ENCODE measurements at regions of chr2 and their contacts with region 1.

Region 1: GRCh38 chr2:55168221-55169154 is 63.6 kb downstream of the CLHC1 start:
- DNase-seq: peak; percentile 85
- ATAC-seq: peak; percentile 69
- H3K4me3 ChIP-seq: no peak overlapping the region
- H3K27ac ChIP-seq: peak overlapping the region; percentile 59
- H3K4me1 ChIP-seq: peaks cover 24% of the 10 kb centered on the region
- H3K27me3 ChIP-seq: no peaks in the 10 kb centered on the region
- CTCF ChIP-seq: peak; percentile 86
- POLR2A ChIP-seq: peak; percentile 35; the same call in 1 of the 2 replicates
- RAD21 ChIP-seq: peak; percentile 95

Region 2: GRCh38 chr2:54899576-54900200 is 268.8 kb before region 1 on chr2:
- CTCF ChIA-PET with region 1: interaction called, 32 read pairs
- POLR2A ChIA-PET with region 1: no interaction called
- dilution Hi-C with region 1: no loop called
- in situ Hi-C with region 1: no loop called
- intact Hi-C with region 1: no loop called
- DNase-seq: peak; percentile 70
- ATAC-seq: peak; percentile 61
- H3K4me3 ChIP-seq: no peak overlapping the region
- H3K27ac ChIP-seq: no peak overlapping the region
- H3K4me1 ChIP-seq: peaks cover 7% of the 10 kb centered on the region
- H3K27me3 ChIP-seq: no peaks in the 10 kb centered on the region; the same call in 1 of the 2 replicates
- CTCF ChIP-seq: peak; percentile 84
- POLR2A ChIP-seq: no peak
- RAD21 ChIP-seq: peak; percentile 86

Region 3: GRCh38 chr2:55010149-55010591 is 158.3 kb before region 1 on chr2:
- CTCF ChIA-PET with region 1: interaction called, 9 read pairs
- POLR2A ChIA-PET with region 1: no interaction called
- dilution Hi-C with region 1: loop called (anchors 25 kb)
- in situ Hi-C with region 1: no loop called
- intact Hi-C with region 1: loop called (anchors 1 kb)
- DNase-seq: peak; percentile 34
- ATAC-seq: no peak
- H3K4me3 ChIP-seq: no peak overlapping the region
- H3K27ac ChIP-seq: no peak overlapping the region
- H3K4me1 ChIP-seq: peaks cover 27% of the 10 kb centered on the region
- H3K27me3 ChIP-seq: no peaks in the 10 kb centered on the region
- CTCF ChIP-seq: no peak
- POLR2A ChIP-seq: peak; percentile 16; the same call in 1 of the 2 replicates
- RAD21 ChIP-seq: no peak

Region 4: GRCh38 chr2:55099878-55100820 is 68.3 kb before region 1 on chr2:
- CTCF ChIA-PET with region 1: interaction called, 4 read pairs
- POLR2A ChIA-PET with region 1: no interaction called
- dilution Hi-C with region 1: no loop called
- in situ Hi-C with region 1: no loop called
- intact Hi-C with region 1: loop called (anchors 2 kb)
- DNase-seq: peak; percentile 84
- ATAC-seq: peak; percentile 31
- H3K4me3 ChIP-seq: no peak overlapping the region
- H3K27ac ChIP-seq: peak overlapping the region; percentile 99
- H3K4me1 ChIP-seq: peaks cover 20% of the 10 kb centered on the region
- H3K27me3 ChIP-seq: no peaks in the 10 kb centered on the region
- CTCF ChIP-seq: no peak
- POLR2A ChIP-seq: no peak
- RAD21 ChIP-seq: no peak